ENCODE measurements at regions of chr4 and their contacts with region 1.

Region 1: GRCh38 chr4:73080789-73081188 is 11.3 kb upstream of the COX18 start:
- DNase-seq: no peak
- ATAC-seq: no peak
- H3K4me3 ChIP-seq: no peak overlapping the region
- H3K4me3 Mint-ChIP-seq: no peak overlapping the region
- H3K27ac ChIP-seq: no peak overlapping the region
- H3K27ac Mint-ChIP-seq: peak overlapping the region; percentile 47 to 67
- H3K4me1 ChIP-seq: peaks cover 4% of the 10 kb centered on the region
- H3K4me1 Mint-ChIP-seq: peaks cover 0 to 6% of the 10 kb centered on the region in 2 donors
- H3K27me3 ChIP-seq: no peaks in the 10 kb centered on the region
- H3K27me3 Mint-ChIP-seq: no peaks in the 10 kb centered on the region
- CTCF ChIP-seq: no peak

Region 2: DNA sequence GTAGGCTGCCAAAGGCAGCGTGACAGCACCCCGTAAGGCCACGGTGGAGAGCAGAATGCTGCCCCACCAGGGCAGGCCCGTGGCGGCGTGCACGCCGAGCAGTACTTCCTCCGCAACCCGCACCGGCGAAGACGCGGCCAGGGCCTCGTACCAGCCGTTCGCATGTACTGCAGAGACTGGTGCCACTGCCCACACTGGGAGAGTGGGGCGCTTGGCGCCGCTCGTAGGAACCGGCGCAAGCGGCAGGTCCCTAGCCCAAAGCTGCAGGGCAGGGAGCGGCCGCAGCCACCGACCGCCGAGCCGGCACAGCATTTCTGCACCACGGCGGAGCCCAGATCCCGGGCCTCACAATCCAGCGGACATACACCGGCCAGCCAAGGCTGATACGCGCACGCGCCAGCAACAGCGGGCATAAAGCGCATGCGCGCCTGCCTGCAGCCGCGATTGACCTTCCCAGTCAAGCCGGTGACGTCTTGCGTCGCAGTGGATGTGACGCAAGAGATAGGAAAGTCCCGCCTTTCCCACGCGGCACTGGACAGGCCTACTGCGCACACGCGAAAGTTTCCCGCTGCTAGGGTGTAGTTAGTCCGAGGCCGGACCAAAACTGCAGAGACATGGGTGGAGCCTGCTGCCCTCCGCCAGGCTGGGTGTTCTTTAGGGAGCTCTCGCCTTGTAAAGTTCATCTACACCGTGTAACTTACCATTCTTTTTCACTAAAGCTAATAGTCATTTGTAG is 11.3 kb before region 1 on chr4 and contains the start of gene COX18:
- intact Hi-C with region 1: loop called (anchors 2 kb)
- DNase-seq: peak; percentile 97 to 99
- ATAC-seq: peak; percentile 77 to 93 (median 81)
- H3K4me3 ChIP-seq: peak within 1 kb of the TSS; percentile 89
- H3K4me3 Mint-ChIP-seq: peak within 1 kb of the TSS; percentile 97
- H3K27ac ChIP-seq: peak within 1 kb of the TSS; percentile 98
- H3K27ac Mint-ChIP-seq: peak within 1 kb of the TSS; percentile 97 to 99
- H3K4me1 ChIP-seq: peaks cover 9% of the 10 kb centered on the region
- H3K4me1 Mint-ChIP-seq: peaks cover 32 to 36% of the 10 kb centered on the region in 2 donors
- H3K27me3 ChIP-seq: no peaks in the 10 kb centered on the region
- H3K27me3 Mint-ChIP-seq: no peaks in the 10 kb centered on the region
- CTCF ChIP-seq: no peak
- total RNA-seq, gene COX18: 9.6 to 10.3 (median 9.7) TPM

Measured in natural killer cell (primary cell).